Left cardiac atrium (tissue), 4 donors: ENCODE measurements at regions of chr16 and their contacts with region 1.

Region 1: GRCh38 chr16:10338426-10338825 is 47.4 kb upstream of the ATF7IP2 start:
- DNase-seq: no peak
- ATAC-seq: no peak

Region 2: GRCh38 chr16:10383626-10384025 is 45.2 kb after region 1 on chr16:
- intact Hi-C with region 1: loop called in 1 of 2 experiments (anchors 5 kb)
- DNase-seq: no peak
- ATAC-seq: peak in 1 of 2 donors; percentile 14

Region 3: DNA sequence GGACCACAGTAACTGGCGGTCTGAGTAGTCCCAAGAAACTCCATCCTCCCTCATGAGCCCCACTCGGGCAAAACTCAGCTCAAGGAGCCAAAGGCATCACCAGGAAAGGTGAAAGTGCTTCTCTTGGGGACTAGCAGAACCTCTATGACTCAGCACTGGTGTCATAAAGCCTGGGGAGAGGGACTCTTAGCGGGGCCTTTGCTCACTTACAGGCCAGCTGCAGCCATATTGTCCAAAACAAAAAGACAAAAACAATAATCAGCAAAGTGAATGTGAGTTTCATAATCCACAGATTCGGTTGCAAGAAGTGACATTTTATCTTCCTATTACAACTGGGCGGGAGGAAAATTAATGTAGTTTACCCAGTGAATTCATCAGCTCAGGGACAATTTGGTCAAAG is 356.4 kb after region 1 on chr16 and contains the start of gene TEKT5:
- intact Hi-C with region 1: no loop called
- DNase-seq: no peak
- ATAC-seq: no peak
- total RNA-seq, gene TEKT5: 0.52 TPM in 1 of 2 donors, not detected in the other